ENCODE measurements at regions of chr12 and their contacts with region 1.

Region 1: DNA sequence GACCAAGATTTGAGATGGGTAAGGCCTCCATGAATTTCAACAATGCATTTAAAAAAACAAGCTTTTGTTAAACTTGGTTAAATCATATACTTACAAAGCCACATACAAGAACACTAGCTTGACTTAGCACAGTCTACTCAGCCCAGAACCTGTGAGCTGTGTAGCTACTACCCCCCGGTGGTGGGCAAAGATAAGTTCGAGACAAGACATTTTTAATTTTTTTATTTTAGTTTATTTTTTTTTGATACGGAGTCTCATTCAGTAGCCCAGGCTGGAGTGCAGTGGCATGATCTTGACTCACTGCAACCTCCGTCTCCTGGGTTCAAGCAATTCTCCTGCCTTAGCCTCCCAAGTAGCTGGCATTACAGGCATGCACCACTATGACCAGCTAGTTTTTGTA is 3.7 kb upstream of the NECAP1 start:
- DNase-seq: peak; percentile 27 to 87 (median 65)
- ATAC-seq: peak; percentile 27
- H3K4me3 ChIP-seq: no peak overlapping the region
- H3K4me3 Mint-ChIP-seq: no peak overlapping the region
- H3K27ac ChIP-seq: no peak overlapping the region
- H3K27ac Mint-ChIP-seq: peak overlapping the region; percentile 97
- H3K4me1 ChIP-seq: peaks cover 26% of the 10 kb centered on the region
- H3K4me1 Mint-ChIP-seq: peaks cover 48% of the 10 kb centered on the region
- H3K27me3 ChIP-seq: no peaks in the 10 kb centered on the region
- H3K27me3 Mint-ChIP-seq: no peaks in the 10 kb centered on the region
- CTCF ChIP-seq: peak; percentile 79

Region 2: DNA sequence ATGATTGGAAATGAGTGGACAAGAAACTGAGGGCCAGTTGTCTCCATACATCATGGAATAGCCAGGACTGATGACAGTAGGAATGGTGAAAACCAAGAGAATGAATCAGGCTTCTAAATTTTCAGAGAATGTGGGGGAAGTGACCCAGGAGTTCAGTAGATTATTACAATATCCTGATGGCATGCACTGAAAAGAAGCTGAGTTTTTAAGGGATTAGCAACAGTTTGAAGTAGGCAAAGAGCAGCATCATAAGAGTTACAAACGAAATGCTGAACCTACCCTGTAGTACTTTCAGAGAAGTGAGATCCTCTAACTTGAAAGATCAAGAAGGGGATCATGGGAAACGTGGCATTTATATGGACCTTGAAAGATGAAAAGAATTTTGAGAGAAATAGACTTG is 218.8 kb before region 1 on chr12:
- CTCF ChIA-PET with region 1: interaction called, 10 read pairs
- POLR2A ChIA-PET with region 1: no interaction called
- intact Hi-C with region 1: loop called (anchors 1 kb)
- DNase-seq: no peak
- ATAC-seq: no peak
- H3K4me3 ChIP-seq: no peak overlapping the region
- H3K4me3 Mint-ChIP-seq: no peak overlapping the region
- H3K27ac ChIP-seq: no peak overlapping the region
- H3K27ac Mint-ChIP-seq: no peak overlapping the region
- H3K4me1 ChIP-seq: no peaks in the 10 kb centered on the region
- H3K4me1 Mint-ChIP-seq: peaks cover 9% of the 10 kb centered on the region
- H3K27me3 ChIP-seq: no peaks in the 10 kb centered on the region
- H3K27me3 Mint-ChIP-seq: peaks cover 5% of the 10 kb centered on the region
- CTCF ChIP-seq: no peak

Region 3: DNA sequence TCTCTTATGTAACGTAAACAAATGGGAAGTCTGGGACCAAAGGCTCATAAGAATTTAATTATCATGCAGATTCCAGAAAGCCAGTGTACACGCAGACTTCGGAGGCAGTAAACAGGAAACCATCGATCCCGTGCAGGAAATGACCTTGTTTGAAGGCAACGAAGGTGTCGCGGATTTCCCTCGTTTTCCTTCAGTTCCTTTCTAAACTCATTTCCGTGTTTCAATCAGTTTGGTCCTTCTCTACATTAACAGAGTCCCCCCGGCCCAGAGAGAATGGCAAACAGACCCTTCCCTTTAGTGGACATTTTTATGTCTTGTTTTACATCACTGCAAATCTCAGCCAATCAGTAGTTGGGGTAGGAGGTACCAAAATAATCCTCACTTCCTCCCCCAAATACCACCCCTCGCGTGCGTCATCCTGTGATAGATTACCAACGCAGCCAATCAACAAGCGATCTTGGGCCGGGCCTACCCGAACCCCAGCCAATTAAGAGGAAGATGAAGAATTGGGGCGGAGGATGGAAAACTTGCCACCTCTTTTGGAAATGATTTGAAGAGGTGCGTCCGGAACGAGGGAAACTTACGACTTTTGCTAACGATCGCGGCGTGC is 52.0 kb before region 1 on chr12:
- CTCF ChIA-PET with region 1: interaction called, 7 read pairs
- POLR2A ChIA-PET with region 1: interaction called, 11 read pairs
- intact Hi-C with region 1: loop called (anchors 1 kb)
- DNase-seq: peak; percentile 90 to 99 (median 94)
- ATAC-seq: peak; percentile 89
- H3K4me3 ChIP-seq: peak overlapping the region; percentile 84 to 93
- H3K4me3 Mint-ChIP-seq: peak overlapping the region; percentile 95
- H3K27ac ChIP-seq: peak overlapping the region; percentile 97 to 100
- H3K27ac Mint-ChIP-seq: peak overlapping the region; percentile 100
- H3K4me1 ChIP-seq: peaks cover 6% of the 10 kb centered on the region
- H3K4me1 Mint-ChIP-seq: peaks cover 21% of the 10 kb centered on the region
- H3K27me3 ChIP-seq: no peaks in the 10 kb centered on the region
- H3K27me3 Mint-ChIP-seq: no peaks in the 10 kb centered on the region
- CTCF ChIP-seq: no peak

Region 4: DNA sequence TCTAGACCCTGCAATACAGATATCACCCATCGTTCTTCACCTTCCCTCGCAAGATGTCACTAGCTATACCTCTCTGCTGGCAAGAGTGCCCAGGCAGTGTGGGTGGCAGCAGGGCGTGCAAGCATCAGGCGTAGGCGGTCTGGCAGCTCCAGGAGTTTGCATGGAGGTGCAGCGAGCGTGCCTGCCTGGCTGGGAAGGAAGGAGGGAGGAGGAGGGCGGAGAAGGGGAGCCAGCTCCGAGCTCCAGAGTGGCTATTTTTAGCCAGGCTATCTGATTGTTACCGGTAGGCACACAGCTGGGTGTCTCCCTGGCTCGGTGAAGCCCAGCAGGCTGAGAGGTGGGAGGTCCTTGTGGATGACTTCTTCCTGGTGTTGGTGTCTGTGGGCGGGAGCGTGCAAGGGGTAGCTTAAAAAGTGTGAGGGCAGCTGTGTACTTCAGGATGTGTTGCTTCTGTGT is 39.7 kb before region 1 on chr12:
- CTCF ChIA-PET with region 1: interaction called, 278 read pairs
- POLR2A ChIA-PET with region 1: interaction called, 3 read pairs
- intact Hi-C with region 1: loop called in 1 of 2 experiments (anchors 2 kb)
- DNase-seq: peak in 5 of 9 experiments; percentile 31 to 56 (median 40)
- ATAC-seq: peak; percentile 50
- H3K4me3 ChIP-seq: peak overlapping the region; percentile 10 to 45
- H3K4me3 Mint-ChIP-seq: peak overlapping the region; percentile 67
- H3K27ac ChIP-seq: no peak overlapping the region
- H3K27ac Mint-ChIP-seq: peak overlapping the region; percentile 60
- H3K4me1 ChIP-seq: peaks cover 59% of the 10 kb centered on the region
- H3K4me1 Mint-ChIP-seq: peaks cover 57% of the 10 kb centered on the region
- H3K27me3 ChIP-seq: no peaks in the 10 kb centered on the region
- H3K27me3 Mint-ChIP-seq: no peaks in the 10 kb centered on the region
- CTCF ChIP-seq: no peak

Region 5: GRCh38 chr12:8065991-8066594 is 12.3 kb before region 1 on chr12 and contains the start of gene C3AR1:
- CTCF ChIA-PET with region 1: interaction called, 58 read pairs
- POLR2A ChIA-PET with region 1: interaction called, 5 read pairs
- intact Hi-C with region 1: loop called (anchors 1 to 2 kb)
- DNase-seq: peak in 7 of 9 experiments; percentile 30 to 87 (median 57)
- ATAC-seq: peak; percentile 97
- H3K4me3 ChIP-seq: peak within 1 kb of the TSS; percentile 5 to 33
- H3K4me3 Mint-ChIP-seq: peak within 1 kb of the TSS; percentile 53
- H3K27ac ChIP-seq: peak within 1 kb of the TSS; percentile 22 to 80
- H3K27ac Mint-ChIP-seq: peak within 1 kb of the TSS; percentile 87
- H3K4me1 ChIP-seq: peaks cover 22% of the 10 kb centered on the region
- H3K4me1 Mint-ChIP-seq: peaks cover 22% of the 10 kb centered on the region
- H3K27me3 ChIP-seq: no peaks in the 10 kb centered on the region
- H3K27me3 Mint-ChIP-seq: no peaks in the 10 kb centered on the region
- CTCF ChIP-seq: no peak
- total RNA-seq, gene C3AR1: 1.8 to 2.8 TPM